Activated B cell treated with CpG ODN at 0.5 μM for 24 hours (primary cell): ENCODE measurements at regions of chr20 and their contacts with region 1.

Region 1: DNA sequence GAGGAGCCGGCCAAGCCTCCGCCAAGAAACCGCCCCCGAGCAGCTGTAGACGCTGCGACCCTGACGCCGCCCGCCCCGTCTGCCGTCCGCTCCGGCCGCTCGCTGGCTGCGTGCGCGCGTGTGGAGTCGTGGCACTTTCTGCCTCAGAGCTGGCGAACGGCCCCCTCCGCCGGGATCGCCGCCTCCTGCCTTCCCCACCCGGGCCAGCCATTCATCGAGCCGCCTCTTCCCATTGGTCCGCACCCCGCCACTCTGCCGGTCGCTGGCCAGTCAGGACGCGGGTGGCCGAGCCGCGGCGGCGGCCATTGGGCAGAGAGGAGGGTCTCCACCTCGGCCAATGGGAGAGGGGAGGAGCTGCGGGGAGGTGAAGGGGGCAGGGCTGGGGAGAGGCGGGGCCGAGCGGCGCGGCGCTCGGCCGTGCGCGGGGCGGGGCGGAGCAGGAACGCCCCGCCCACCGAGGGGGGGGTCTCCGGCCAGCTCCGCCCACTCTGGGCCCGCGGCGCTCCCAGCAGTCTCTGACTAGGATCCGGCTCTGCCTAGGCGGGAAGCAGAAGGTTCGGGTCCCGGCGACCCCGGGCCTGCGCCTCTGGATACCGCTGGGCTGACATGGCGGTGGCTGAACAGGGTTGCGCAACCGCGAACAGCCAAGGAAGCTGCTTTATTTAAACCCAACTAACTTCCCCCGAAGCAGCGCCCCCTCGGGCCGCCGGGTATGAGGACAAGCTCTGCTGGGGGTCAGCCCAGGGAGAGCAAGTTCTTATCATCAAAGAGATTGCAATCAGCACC is at the start of gene RRBP1:
- DNase-seq: peak; percentile 92
- ATAC-seq: peak; percentile 94
- H3K4me3 Mint-ChIP-seq: peak within 1 kb of the TSS; percentile 86
- H3K27ac Mint-ChIP-seq: peak within 1 kb of the TSS; percentile 82
- H3K4me1 Mint-ChIP-seq: peaks cover 20% of the 10 kb centered on the region
- H3K27me3 Mint-ChIP-seq: peaks cover 23% of the 10 kb centered on the region
- CTCF ChIP-seq: no peak
- total RNA-seq, gene RRBP1: 18.9 and 22.0 TPM in 2 replicates

Region 2: DNA sequence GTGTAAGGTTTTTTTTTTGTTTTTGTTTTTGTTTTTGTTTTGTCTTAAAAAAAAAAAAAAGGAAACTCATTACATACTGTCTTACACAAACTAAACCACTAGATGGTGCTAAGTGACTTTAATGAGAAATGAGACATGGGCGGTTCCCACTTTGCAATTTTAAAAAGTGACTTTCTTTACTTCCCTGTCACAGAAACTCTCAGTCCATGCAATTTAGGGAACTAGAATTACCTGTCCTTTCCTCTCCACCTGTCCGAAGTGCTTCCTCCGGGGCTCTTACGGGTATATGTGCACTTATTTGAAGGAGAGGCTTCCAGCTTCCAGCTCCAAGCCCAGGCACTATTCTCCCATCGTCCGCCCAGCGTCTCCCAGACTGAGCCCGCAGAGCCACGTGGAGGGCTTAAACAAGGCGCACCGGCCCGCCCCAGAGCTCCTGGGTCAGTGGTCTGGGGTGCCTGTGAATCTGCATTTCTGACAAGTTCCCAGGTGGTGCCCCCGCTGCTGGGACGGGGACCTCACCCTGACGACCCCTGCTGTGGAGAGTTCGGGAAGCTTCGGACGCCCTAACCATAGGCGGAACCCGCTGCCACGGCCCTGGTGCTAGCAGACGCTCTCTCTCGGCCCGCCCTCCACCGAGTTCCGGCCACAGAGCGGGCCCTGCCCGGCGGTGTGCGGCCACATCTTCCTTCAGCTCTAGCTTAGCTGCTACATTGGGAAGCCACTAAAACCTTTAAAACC is 177.2 kb before region 1 on chr20:
- CTCF ChIA-PET with region 1: interaction called, 7 read pairs
- POLR2A ChIA-PET with region 1: interaction called, 6 read pairs
- intact Hi-C with region 1: loop called (anchors 1 kb)
- DNase-seq: peak; percentile 51
- ATAC-seq: peak; percentile 84
- H3K4me3 Mint-ChIP-seq: peak overlapping the region; percentile 91
- H3K27ac Mint-ChIP-seq: peak overlapping the region; percentile 85
- H3K4me1 Mint-ChIP-seq: peaks cover 9% of the 10 kb centered on the region
- H3K27me3 Mint-ChIP-seq: peaks cover 12% of the 10 kb centered on the region
- CTCF ChIP-seq: peak; percentile 56

Region 3: GRCh38 chr20:17716331-17716730 is 34.0 kb after region 1 on chr20:
- CTCF ChIA-PET with region 1: no interaction called
- POLR2A ChIA-PET with region 1: no interaction called
- intact Hi-C with region 1: no loop called
- DNase-seq: no peak
- ATAC-seq: no peak
- H3K4me3 Mint-ChIP-seq: no peak overlapping the region
- H3K27ac Mint-ChIP-seq: no peak overlapping the region
- H3K4me1 Mint-ChIP-seq: no peaks in the 10 kb centered on the region
- H3K27me3 Mint-ChIP-seq: peaks cover 3% of the 10 kb centered on the region
- CTCF ChIP-seq: no peak

Region 4: GRCh38 chr20:17856024-17856564 is 173.8 kb after region 1 on chr20:
- CTCF ChIA-PET with region 1: interaction called, 4 read pairs
- POLR2A ChIA-PET with region 1: interaction called, 6 read pairs
- intact Hi-C with region 1: loop called (anchors 1 kb)
- DNase-seq: peak; percentile 56
- ATAC-seq: peak; percentile 90
- H3K4me3 Mint-ChIP-seq: peak overlapping the region; percentile 65
- H3K27ac Mint-ChIP-seq: peak overlapping the region; percentile 82
- H3K4me1 Mint-ChIP-seq: peaks cover 73% of the 10 kb centered on the region
- H3K27me3 Mint-ChIP-seq: no peaks in the 10 kb centered on the region
- CTCF ChIP-seq: no peak

Region 5: DNA sequence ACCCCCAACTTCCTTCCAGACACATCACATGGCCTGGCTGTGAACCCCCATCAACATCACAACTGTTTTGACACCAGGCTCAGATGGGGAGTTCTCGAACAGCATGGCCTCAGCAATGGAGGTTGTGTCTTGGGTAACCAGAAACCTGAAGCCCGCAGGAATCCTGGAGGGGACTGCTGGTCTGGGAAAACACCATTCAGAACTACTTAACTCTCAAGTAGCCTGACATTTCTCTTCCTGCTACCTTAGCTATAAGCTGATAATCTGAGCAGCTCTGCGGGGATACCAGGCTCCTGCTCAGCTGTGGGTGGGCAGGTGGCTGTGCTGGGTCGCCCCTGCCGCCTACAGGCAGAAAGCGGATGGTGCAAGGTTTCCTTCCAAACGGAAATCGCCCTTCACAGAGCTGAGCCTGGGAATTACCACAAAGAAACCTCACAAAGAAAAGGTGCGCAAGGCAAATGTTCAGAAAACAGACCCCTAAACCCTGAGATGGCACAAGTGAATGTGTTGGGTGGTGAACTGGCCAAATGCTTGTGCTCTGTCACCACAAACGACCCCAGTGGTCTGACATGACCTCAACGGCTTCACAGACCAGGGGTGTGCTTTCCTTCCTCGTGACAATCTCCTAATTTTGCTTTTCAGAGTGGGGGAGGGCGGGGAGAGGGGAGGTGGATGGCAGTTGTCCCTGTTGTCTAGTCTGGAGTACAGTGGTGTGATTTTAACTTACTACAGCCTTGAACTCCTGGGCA is 256.7 kb after region 1 on chr20:
- CTCF ChIA-PET with region 1: interaction called, 46 read pairs
- POLR2A ChIA-PET with region 1: interaction called, 11 read pairs
- intact Hi-C with region 1: loop called (anchors 1 kb)
- DNase-seq: peak; percentile 48
- ATAC-seq: peak; percentile 88
- H3K4me3 Mint-ChIP-seq: no peak overlapping the region
- H3K27ac Mint-ChIP-seq: no peak overlapping the region
- H3K4me1 Mint-ChIP-seq: peaks cover 33% of the 10 kb centered on the region
- H3K27me3 Mint-ChIP-seq: no peaks in the 10 kb centered on the region
- CTCF ChIP-seq: peak; percentile 55

Region 6: DNA sequence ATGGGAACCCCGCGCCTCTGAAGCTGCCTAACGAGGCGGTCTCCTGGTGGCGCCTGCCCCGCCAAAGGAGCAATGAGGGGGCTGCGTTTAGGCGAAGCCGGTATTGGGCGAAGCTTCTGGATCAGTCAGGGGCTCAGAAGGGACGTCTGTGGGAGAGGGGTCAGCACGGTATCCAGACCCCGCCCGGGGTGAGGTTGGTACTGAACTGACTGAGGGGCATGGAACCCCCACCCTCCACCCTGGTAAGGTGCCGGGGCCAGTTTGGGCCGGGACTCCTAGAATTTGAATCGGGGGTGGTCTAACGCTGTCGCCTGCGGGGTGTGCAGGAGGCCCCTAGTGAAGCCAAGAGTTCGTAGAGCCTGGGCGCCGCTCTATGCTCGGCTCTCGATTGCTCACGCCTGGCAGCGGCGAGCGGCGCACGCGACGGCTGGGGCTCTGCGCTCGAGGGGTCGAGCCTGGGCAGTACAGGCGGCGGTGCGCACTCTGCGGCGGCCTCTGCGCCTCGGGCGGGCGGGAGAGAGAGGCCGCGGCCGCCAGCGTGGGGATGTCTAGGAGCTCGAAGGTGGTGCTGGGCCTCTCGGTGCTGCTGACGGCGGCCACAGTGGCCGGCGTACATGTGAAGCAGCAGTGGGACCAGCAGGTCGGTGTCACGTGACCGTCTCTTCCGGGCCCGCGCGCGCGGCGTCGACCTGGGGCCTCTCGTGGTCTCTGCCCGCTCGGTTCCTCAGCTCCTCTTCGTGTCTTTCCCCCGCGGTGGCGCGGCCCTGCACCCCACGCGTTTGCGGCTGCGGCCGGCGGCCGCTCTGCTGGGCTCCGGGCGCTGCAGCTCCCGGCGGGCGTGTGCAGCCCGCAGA is 455.3 kb after region 1 on chr20 and contains the starts of genes KAT14 and PET117:
- CTCF ChIA-PET with region 1: interaction called, 5 read pairs
- POLR2A ChIA-PET with region 1: interaction called, 10 read pairs
- intact Hi-C with region 1: loop called (anchors 1 kb)
- DNase-seq: peak; percentile 96
- ATAC-seq: peak; percentile 91
- H3K4me3 Mint-ChIP-seq: peak within 1 kb of the TSS; percentile 90
- H3K27ac Mint-ChIP-seq: peak within 1 kb of the TSS; percentile 87
- H3K4me1 Mint-ChIP-seq: peaks cover 23% of the 10 kb centered on the region
- H3K27me3 Mint-ChIP-seq: no peaks in the 10 kb centered on the region
- CTCF ChIP-seq: no peak
- total RNA-seq, gene KAT14: 14.9 and 15.6 TPM in 2 replicates
- total RNA-seq, gene PET117: 10.1 and 13.6 TPM in 2 replicates

Region 7: DNA sequence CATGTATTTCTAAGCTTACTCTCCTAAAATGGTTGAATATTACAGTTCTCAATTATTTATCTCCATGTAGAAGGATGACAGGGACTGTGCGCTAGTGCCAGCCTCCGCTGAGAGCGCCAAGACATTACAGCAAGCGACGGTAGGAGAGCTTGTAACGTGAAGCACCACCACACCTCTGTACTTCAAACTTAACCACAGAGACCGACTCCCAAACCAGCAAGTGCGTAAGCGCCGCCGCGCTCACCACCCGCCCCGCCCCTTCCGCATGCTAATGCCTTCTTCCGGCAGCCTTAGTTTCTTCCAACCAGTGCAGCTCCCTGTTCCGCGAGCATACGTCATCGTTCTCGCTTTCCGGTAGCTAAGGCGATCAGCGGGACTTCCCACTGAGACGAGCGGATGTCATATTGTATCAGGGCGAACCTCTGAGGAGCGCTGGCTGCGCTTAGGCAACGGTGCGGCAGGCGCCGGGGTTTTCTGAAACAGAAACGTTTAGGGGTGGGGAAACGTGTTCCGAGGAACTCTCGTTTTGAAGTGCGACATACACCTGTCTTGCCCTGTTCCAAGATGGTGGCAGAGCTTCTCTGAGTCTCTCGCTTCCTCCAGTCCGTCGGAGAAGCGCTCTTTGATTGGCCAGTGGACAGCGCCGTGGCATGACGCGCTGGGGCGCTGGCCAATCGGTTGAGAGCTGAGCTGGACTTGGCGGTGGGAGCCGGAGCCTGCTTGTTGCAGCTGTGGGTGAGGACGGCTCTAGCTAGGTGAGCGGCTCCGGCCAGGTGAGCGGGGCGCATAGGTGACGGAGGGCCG is 825.1 kb after region 1 on chr20 and contains the start of gene SEC23B:
- CTCF ChIA-PET with region 1: no interaction called
- POLR2A ChIA-PET with region 1: interaction called, 5 read pairs
- intact Hi-C with region 1: loop called (anchors 2 kb)
- DNase-seq: peak; percentile 92
- ATAC-seq: peak; percentile 92
- H3K4me3 Mint-ChIP-seq: peak within 1 kb of the TSS; percentile 100
- H3K27ac Mint-ChIP-seq: peak within 1 kb of the TSS; percentile 100
- H3K4me1 Mint-ChIP-seq: peaks cover 36% of the 10 kb centered on the region
- H3K27me3 Mint-ChIP-seq: peaks cover 2% of the 10 kb centered on the region
- CTCF ChIP-seq: no peak
- total RNA-seq, gene SEC23B: 52.0 and 56.6 TPM in 2 replicates